ENCODE measurements at regions of chr16 and their contacts with region 1.

Region 1: DNA sequence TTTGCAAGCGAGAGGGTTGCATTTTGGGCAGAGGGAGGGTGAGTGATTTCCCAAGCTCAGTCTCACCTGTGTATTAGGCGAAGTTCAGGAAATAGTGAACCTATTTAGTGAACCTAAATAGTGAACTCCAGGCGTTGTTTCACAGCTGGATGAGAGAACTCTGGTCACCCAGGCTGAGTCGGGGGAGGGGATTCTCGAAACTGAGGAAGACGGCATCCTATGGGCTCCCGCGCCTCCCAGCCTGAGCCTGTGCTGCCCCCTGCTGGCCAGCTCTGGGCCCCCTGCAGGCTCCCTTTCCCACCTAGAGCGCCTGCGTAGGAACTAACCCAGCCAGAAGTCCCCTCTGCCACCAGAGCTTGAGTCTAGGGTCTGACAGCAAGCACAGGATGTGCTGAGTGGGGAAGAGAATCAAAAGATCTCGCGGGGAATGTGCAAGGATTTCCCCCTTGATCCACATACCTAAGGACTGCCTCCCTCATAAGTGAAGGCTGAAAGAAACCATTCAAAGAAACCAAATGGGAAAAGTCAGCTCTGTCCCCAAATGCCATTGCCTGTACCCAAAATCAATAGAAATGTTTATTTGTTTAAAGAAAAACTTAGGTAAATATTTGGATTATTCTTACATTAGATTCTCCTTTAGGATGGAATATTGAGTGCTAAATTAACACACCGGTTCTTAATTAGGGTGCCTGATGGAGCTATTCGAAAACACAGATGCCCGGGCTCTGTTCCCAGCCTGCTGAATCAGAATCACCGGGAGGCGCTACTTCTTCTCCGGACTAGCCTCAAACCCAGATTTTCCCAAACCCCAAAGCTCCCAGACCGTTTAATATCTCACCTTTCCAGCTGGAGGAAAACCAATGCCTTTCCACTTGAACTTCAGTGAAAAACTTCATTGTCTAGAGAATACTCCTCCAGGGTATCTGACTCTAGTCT is 14.8 kb upstream of the MARVELD3 start:
- DNase-seq: peak; percentile 83
- ATAC-seq: peak; percentile 87
- H3K4me3 Mint-ChIP-seq: peak overlapping the region; percentile 26
- H3K27ac Mint-ChIP-seq: no peak overlapping the region
- H3K4me1 Mint-ChIP-seq: peaks cover 9% of the 10 kb centered on the region
- H3K27me3 Mint-ChIP-seq: peaks cover 31% of the 10 kb centered on the region

Region 2: GRCh38 chr16:71412270-71413160 is 198.7 kb before region 1 on chr16:
- CTCF ChIA-PET with region 1: interaction called, 30 read pairs
- DNase-seq: peak; percentile 66
- ATAC-seq: peak; percentile 77
- H3K4me3 Mint-ChIP-seq: no peak overlapping the region
- H3K27ac Mint-ChIP-seq: no peak overlapping the region
- H3K4me1 Mint-ChIP-seq: peaks cover 11% of the 10 kb centered on the region
- H3K27me3 Mint-ChIP-seq: peaks cover 45% of the 10 kb centered on the region

Region 3: GRCh38 chr16:71537643-71538042 is 73.6 kb before region 1 on chr16:
- CTCF ChIA-PET with region 1: interaction called, 11 read pairs
- DNase-seq: peak; percentile 50
- ATAC-seq: peak; percentile 69
- H3K4me3 Mint-ChIP-seq: no peak overlapping the region
- H3K27ac Mint-ChIP-seq: no peak overlapping the region
- H3K4me1 Mint-ChIP-seq: peaks cover 2% of the 10 kb centered on the region
- H3K27me3 Mint-ChIP-seq: peaks cover 4% of the 10 kb centered on the region

Region 4: DNA sequence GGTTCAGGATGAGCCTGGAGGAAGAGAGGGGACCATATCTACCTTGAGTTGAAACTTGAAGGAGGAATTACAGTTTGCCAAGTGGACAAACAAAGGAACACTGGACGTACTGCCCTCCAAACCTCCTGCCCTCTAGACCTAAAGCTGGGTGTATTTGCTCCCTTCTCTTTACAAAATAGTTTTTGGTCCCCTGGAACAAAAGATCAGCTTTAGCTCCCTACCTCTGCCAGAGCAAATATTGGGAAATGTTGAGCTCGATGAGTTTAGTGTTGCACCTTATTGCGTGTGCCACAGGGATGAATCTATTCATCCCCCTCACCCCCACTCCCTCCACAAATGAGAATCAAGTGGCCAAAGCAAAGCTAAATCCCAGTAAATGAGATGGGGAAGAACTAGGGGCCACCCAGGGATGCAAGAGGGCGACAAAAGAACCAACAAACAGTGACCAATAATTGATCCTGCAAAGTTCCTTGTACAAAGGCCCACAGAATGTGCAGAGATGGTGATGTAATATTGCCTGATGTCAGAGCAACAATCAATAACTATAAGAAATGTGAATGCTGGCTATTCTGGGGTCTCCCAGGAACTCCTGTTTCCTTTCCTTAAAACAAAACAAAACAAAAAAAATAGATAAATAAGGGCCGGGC is 17.1 kb before region 1 on chr16:
- CTCF ChIA-PET with region 1: interaction called, 10 read pairs
- DNase-seq: no peak
- ATAC-seq: no peak
- H3K4me3 Mint-ChIP-seq: no peak overlapping the region
- H3K27ac Mint-ChIP-seq: no peak overlapping the region
- H3K4me1 Mint-ChIP-seq: no peaks in the 10 kb centered on the region
- H3K27me3 Mint-ChIP-seq: peaks cover 49% of the 10 kb centered on the region

Region 5: DNA sequence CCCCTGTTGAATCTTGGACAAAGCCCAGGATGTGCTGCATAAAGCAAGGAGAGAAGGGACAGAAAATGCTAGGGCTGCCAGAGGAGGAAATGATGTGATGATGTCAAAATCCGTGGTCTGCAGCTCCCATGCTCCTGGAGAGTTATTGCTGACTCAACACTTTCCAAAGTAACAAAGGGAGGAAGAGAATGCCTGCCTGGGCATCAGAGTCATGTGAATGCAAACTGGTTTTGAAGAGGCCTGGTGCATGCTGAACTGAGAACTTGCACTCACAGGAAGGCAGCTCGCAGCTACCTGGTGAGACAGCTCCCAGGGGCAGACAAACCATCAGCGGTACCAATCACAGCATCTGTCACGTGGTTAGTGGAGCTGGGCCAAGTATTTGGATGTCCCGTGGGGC is 17.6 kb after region 1 on chr16:
- CTCF ChIA-PET with region 1: interaction called, 20 read pairs
- DNase-seq: no peak
- ATAC-seq: no peak
- H3K4me3 Mint-ChIP-seq: no peak overlapping the region
- H3K27ac Mint-ChIP-seq: no peak overlapping the region
- H3K4me1 Mint-ChIP-seq: peaks cover 12% of the 10 kb centered on the region
- H3K27me3 Mint-ChIP-seq: peaks cover 30% of the 10 kb centered on the region